CD8-positive, alpha-beta memory T cell (primary cell): ENCODE measurements at regions of chr18 and their contacts with region 1.

Region 1: DNA sequence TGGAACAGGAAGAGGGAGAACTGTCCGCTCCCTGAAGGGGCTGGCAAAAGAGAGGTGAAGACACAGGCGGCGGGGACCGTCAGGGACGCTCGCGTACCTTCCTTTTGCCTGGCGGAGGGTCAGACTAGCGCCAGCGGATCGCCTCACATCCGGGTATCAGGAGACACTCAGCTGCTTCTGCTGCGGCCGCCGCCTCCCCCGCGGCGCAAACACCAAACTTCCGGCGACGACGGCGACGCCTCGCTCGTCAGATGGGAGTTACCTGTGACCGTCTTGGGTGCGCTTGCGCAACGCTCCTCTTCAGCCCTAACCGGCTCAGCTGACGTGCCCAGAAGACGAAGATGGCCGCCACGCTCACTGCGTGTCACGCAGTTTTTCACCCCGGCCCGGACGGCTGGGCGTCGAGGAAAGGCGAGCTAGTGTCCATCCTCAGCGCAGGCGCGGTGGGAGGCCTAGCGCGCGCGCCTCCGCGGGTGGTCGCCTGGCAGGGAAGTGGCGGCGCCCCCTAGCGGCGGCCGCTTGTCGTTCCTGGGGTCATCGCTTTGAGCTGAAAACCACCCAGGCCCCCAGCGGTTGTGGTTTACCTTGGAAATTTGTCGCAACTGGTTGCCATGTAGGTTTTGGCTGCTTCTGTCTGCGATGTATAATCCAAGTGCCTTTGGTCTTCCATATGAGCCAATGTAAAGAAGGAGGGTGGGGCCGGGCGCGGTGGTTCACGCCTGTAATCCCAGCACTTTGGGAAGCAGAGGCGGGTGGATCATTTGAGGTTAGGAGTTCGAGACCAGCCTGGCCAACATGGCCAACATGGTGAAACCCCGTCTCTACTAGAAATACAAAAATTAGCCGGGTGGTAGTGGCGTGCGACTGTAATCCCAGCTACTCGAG is at the start of gene ESCO1:
- DNase-seq: peak; percentile 90 to 98 (median 97)
- H3K4me3 ChIP-seq: peak within 1 kb of the TSS; percentile 92
- H3K4me3 Mint-ChIP-seq: peak within 1 kb of the TSS; percentile 91 to 98 (median 97)
- H3K27ac ChIP-seq: peak within 1 kb of the TSS; percentile 99
- H3K27ac Mint-ChIP-seq: peak within 1 kb of the TSS; percentile 94 to 100 (median 98)
- H3K4me1 ChIP-seq: peaks cover 29% of the 10 kb centered on the region
- H3K4me1 Mint-ChIP-seq: peaks cover 33 to 64% (median 45%) of the 10 kb centered on the region in 3 donors
- H3K27me3 ChIP-seq: no peaks in the 10 kb centered on the region
- H3K27me3 Mint-ChIP-seq: peaks cover 0 to 6% of the 10 kb centered on the region in 2 donors
- total RNA-seq, gene ESCO1: 18.2 to 19.3 TPM

Region 2: GRCh38 chr18:21612125-21612991 is 11.6 kb after region 1 on chr18 and contains the start of gene SNRPD1:
- CTCF ChIA-PET with region 1: interaction called, 131 read pairs
- POLR2A ChIA-PET with region 1: interaction called, 63 read pairs
- DNase-seq: peak; percentile 80 to 88 (median 82)
- H3K4me3 ChIP-seq: peak within 1 kb of the TSS; percentile 66
- H3K4me3 Mint-ChIP-seq: peak within 1 kb of the TSS; percentile 96 to 100 (median 98)
- H3K27ac ChIP-seq: peak within 1 kb of the TSS; percentile 75
- H3K27ac Mint-ChIP-seq: peak within 1 kb of the TSS; percentile 92 to 100 (median 98)
- H3K4me1 ChIP-seq: peaks cover 28% of the 10 kb centered on the region
- H3K4me1 Mint-ChIP-seq: peaks cover 34 to 51% (median 47%) of the 10 kb centered on the region in 3 donors
- H3K27me3 ChIP-seq: no peaks in the 10 kb centered on the region
- H3K27me3 Mint-ChIP-seq: no peaks in the 10 kb centered on the region
- total RNA-seq, gene SNRPD1: 154 to 165 TPM

Region 3: GRCh38 chr18:21632393-21632792 is 31.6 kb after region 1 on chr18:
- CTCF ChIA-PET with region 1: interaction called, 10 read pairs
- POLR2A ChIA-PET with region 1: no interaction called
- DNase-seq: no peak
- H3K4me3 ChIP-seq: no peak overlapping the region
- H3K4me3 Mint-ChIP-seq: no peak overlapping the region
- H3K27ac ChIP-seq: no peak overlapping the region
- H3K27ac Mint-ChIP-seq: peak overlapping the region in 2 of 8 donors; percentile 36 to 60
- H3K4me1 ChIP-seq: peaks cover 8% of the 10 kb centered on the region
- H3K4me1 Mint-ChIP-seq: peaks cover 19 to 24% (median 22%) of the 10 kb centered on the region in 3 donors
- H3K27me3 ChIP-seq: no peaks in the 10 kb centered on the region
- H3K27me3 Mint-ChIP-seq: no peaks in the 10 kb centered on the region

Region 4: DNA sequence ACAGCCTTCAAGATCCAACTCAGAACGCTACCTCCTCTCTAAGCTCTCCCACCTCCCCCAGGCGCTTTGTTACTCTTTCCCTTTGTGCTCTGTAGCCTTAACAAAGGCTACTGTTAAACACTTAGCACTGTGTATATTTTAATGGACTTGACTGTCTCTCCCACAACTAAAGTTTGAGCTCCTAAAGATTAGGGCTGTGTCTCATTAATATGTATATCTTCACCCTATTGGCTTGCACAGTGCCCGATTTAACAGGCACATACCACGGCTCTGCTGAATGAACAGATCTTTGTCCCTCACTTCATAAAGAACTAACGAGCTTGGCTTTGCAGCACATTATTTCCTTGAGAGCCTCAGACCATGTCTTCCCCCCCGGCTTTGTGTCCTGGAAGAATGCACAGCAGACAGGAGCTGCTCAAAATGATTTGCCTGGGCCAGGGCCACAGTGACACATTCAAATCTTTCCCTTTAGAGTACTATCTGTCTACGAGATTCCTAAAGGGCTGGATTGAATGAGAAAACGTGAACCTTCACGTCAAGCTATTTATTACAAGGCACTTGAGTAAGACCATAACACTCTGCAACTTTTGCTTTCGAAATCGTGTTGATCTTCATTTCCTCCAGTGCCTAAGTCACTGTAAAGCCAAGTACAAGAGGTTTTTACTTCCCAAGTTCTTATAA is 81.7 kb after region 1 on chr18:
- CTCF ChIA-PET with region 1: interaction called, 15 read pairs
- POLR2A ChIA-PET with region 1: interaction called, 10 read pairs
- DNase-seq: peak in 2 of 5 donors; percentile 34 to 57
- H3K4me3 ChIP-seq: peak overlapping the region; percentile 62
- H3K4me3 Mint-ChIP-seq: no peak overlapping the region
- H3K27ac ChIP-seq: peak overlapping the region; percentile 74
- H3K27ac Mint-ChIP-seq: no peak overlapping the region
- H3K4me1 ChIP-seq: peaks cover 16% of the 10 kb centered on the region
- H3K4me1 Mint-ChIP-seq: peaks cover 17 to 32% (median 28%) of the 10 kb centered on the region in 3 donors
- H3K27me3 ChIP-seq: no peaks in the 10 kb centered on the region
- H3K27me3 Mint-ChIP-seq: no peaks in the 10 kb centered on the region

Region 5: GRCh38 chr18:21693322-21693721 is 92.6 kb after region 1 on chr18:
- CTCF ChIA-PET with region 1: no interaction called
- POLR2A ChIA-PET with region 1: no interaction called
- DNase-seq: no peak
- H3K4me3 ChIP-seq: no peak overlapping the region
- H3K4me3 Mint-ChIP-seq: no peak overlapping the region
- H3K27ac ChIP-seq: no peak overlapping the region
- H3K27ac Mint-ChIP-seq: peak overlapping the region in 1 of 8 donors; percentile 2
- H3K4me1 ChIP-seq: no peaks in the 10 kb centered on the region
- H3K4me1 Mint-ChIP-seq: peaks cover 14 to 37% (median 32%) of the 10 kb centered on the region in 3 donors
- H3K27me3 ChIP-seq: no peaks in the 10 kb centered on the region
- H3K27me3 Mint-ChIP-seq: no peaks in the 10 kb centered on the region

Region 6: DNA sequence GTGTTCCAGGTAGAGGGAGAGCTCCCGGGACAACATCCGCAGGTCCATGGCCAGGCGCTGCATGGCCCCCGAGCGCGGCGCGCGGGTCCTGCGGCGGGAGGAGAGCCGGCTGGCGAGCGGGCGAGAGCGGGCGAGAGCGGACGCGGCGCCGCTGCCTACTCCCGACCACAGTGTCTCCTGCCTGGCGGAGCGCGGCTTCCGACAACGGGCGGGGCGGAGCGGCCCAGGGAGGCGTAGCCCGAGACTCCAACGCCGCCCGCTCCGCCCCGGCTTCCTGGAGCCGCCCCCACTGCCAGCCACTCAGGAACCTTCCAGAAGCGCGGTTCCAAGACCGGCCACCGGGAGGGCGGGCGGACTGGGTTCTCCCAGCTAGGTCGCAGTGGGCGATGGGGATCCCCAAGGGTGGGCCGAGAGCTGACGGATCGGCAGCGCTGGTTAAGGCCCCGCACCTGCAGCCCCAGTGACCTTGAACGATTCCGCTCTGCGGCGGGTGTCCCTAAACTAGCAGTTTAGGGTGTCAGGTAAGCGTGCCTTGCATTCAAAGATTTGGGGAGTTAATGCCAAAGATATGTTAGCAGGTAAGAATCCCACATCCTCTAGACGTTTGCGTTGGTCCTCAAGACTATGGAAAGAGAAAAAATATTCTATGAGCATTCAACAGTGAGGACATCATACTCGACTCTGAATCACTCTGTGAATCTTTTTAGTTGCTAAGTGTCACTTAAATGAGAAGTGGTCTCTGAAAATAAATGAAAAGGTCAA is 104.0 kb after region 1 on chr18 and contains the start of gene ABHD3:
- CTCF ChIA-PET with region 1: interaction called, 9 read pairs
- POLR2A ChIA-PET with region 1: interaction called, 22 read pairs
- DNase-seq: peak; percentile 90 to 94 (median 92)
- H3K4me3 ChIP-seq: peak within 1 kb of the TSS; percentile 87
- H3K4me3 Mint-ChIP-seq: peak within 1 kb of the TSS; percentile 92 to 99 (median 98)
- H3K27ac ChIP-seq: peak within 1 kb of the TSS; percentile 89
- H3K27ac Mint-ChIP-seq: peak within 1 kb of the TSS; percentile 91 to 98 (median 96)
- H3K4me1 ChIP-seq: peaks cover 21% of the 10 kb centered on the region
- H3K4me1 Mint-ChIP-seq: peaks cover 28 to 37% (median 31%) of the 10 kb centered on the region in 3 donors
- H3K27me3 ChIP-seq: no peaks in the 10 kb centered on the region
- H3K27me3 Mint-ChIP-seq: no peaks in the 10 kb centered on the region
- total RNA-seq, gene ABHD3: 30.0 to 31.3 TPM

Region 7: DNA sequence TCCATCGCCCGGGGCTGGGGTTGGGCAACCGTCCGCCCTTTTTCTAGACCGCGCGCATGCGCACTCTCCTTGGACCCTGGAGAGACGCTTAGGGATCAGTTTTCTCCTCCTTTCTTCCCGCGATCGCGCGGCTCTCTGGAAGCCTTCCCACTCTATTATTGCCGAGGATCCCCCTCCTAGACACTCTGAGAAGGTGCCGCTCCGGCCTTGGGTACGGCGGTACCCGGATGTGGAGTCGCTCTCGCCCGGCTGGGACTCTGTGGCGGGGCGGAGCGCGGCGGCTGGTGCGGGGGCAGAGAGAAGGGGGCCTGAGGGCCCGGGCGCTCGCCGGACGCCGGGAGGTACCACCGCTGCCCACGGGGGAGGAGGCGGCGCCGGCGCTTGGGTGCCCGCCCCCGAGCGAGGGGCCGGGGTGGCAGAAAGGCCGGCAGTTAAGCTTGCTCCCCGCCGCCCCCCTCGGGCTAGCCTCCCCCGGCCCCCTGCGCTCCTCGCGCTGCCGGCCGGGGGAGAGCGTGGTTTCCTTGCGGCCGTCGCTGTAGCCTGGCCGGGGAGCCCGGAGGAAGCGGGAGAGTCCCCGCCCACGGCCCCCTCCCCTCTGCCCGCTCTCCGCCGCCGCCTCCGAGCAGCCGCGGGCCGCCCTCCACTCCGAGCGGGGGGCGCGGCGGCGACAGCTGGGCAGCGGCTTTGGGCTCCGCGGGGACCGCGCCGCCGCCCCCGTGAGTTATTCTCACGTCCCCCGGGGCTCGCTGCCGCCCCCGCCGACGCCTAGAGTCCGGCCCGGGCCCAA is 140.1 kb after region 1 on chr18 and contains the start of gene MIB1:
- CTCF ChIA-PET with region 1: interaction called, 21 read pairs
- POLR2A ChIA-PET with region 1: interaction called, 33 read pairs
- DNase-seq: peak in 3 of 5 donors; percentile 98 to 99 (median 99)
- H3K4me3 ChIP-seq: peak within 1 kb of the TSS; percentile 86
- H3K4me3 Mint-ChIP-seq: peak within 1 kb of the TSS; percentile 85 to 98 (median 96)
- H3K27ac ChIP-seq: peak within 1 kb of the TSS; percentile 87
- H3K27ac Mint-ChIP-seq: peak within 1 kb of the TSS; percentile 82 to 99 (median 96)
- H3K4me1 ChIP-seq: peaks cover 30% of the 10 kb centered on the region
- H3K4me1 Mint-ChIP-seq: peaks cover 42 to 49% (median 47%) of the 10 kb centered on the region in 3 donors
- H3K27me3 ChIP-seq: no peaks in the 10 kb centered on the region
- H3K27me3 Mint-ChIP-seq: peaks cover 0 to 7% of the 10 kb centered on the region in 2 donors
- total RNA-seq, gene MIB1: 45.8 to 47.0 TPM